Heart right ventricle (tissue), 16 donors: ENCODE measurements at regions of chr12 and their contacts with region 1.

Region 1: DNA sequence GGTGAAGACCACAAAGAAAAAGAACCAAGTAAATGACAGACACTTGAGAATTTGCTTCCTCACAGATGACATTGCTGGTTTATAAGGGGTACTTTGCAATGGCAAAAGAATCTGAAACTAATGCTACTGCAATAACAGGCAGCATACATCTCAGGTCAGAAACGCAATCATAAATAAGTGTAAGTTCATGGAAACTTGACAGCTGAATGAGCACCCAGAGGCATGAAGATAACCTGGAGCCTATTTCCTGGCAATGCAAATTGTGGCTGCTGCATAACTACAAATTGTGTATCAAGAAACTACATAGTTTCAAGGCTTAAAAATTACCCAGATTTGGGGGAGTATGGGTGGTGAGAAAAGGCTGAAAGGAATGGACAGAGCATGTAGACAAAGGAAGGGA is 8.5 kb upstream of the MYO1A start:
- DNase-seq: no peak
- ATAC-seq: no peak
- H3K4me3 ChIP-seq: no peak overlapping the region
- H3K27ac ChIP-seq: no peak overlapping the region
- H3K4me1 ChIP-seq: peaks cover 0 to 6% (median 0%) of the 10 kb centered on the region in 9 donors
- H3K27me3 ChIP-seq: no peaks in the 10 kb centered on the region
- CTCF ChIP-seq: no peak

Region 2: DNA sequence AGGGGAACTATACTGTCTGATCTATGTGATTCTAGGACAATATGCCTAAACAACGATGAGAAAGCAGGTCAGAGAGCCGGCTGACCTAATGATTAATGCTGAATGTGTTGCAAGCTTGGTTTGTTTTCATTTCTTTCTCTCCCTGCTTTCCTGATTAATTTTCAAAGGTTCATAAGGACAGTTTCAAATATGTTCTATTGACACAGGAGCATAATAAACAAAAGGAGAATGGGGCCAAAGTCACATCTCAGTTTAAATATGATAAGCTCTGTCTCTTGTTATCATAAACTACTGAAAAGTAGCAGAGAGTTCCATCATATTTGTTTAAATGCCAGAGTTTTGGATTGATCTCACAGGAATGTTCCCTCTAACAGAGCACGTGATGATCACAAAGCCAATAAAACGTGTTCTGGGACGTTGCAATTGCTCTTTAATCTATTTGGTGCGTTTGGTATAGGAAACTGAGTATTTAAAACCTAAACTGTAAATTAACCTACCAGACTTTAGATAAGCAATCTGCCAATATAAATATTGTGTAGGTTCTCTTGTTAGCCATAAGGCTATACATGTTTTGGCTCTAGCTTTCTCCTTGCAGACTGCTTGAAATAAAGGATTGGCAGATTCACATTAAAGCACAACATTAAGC is 299.1 kb before region 1 on chr12:
- intact Hi-C with region 1: loop called in 6 of 10 experiments (anchors 5 to 10 kb)
- DNase-seq: no peak
- ATAC-seq: no peak
- H3K4me3 ChIP-seq: no peak overlapping the region
- H3K27ac ChIP-seq: no peak overlapping the region
- H3K4me1 ChIP-seq: no peaks in the 10 kb centered on the region
- H3K27me3 ChIP-seq: no peaks in the 10 kb centered on the region
- CTCF ChIP-seq: no peak

Region 3: GRCh38 chr12:57012600-57013465 is 45.6 kb before region 1 on chr12:
- intact Hi-C with region 1: loop called in 7 of 10 experiments (anchors 5 kb)
- DNase-seq: no peak
- ATAC-seq: no peak
- H3K4me3 ChIP-seq: no peak overlapping the region
- H3K27ac ChIP-seq: no peak overlapping the region
- H3K4me1 ChIP-seq: peaks cover 0 to 3% (median 0%) of the 10 kb centered on the region in 9 donors
- H3K27me3 ChIP-seq: peaks cover 0 to 44% (median 34%) of the 10 kb centered on the region in 7 donors
- CTCF ChIP-seq: no peak

Region 4: GRCh38 chr12:57101844-57102695 is 43.6 kb after region 1 on chr12:
- intact Hi-C with region 1: no loop called
- DNase-seq: no peak
- ATAC-seq: peak in 1 of 8 donors; percentile 6
- H3K4me3 ChIP-seq: no peak overlapping the region
- H3K27ac ChIP-seq: peak overlapping the region in 1 of 10 donors; percentile 60
- H3K4me1 ChIP-seq: peaks cover 0 to 11% (median 3%) of the 10 kb centered on the region in 9 donors
- H3K27me3 ChIP-seq: no peaks in the 10 kb centered on the region
- CTCF ChIP-seq: no peak